Natural killer cell (primary cell): ENCODE measurements at regions of chr17 and their contacts with region 1.

Region 1: GRCh38 chr17:10984220-10984619 is 146.3 kb upstream of the PIRT start:
- DNase-seq: no peak
- ATAC-seq: no peak
- H3K4me3 ChIP-seq: no peak overlapping the region
- H3K4me3 Mint-ChIP-seq: no peak overlapping the region
- H3K27ac ChIP-seq: no peak overlapping the region
- H3K27ac Mint-ChIP-seq: no peak overlapping the region
- H3K4me1 ChIP-seq: no peaks in the 10 kb centered on the region
- H3K4me1 Mint-ChIP-seq: no peaks in the 10 kb centered on the region
- H3K27me3 ChIP-seq: no peaks in the 10 kb centered on the region
- H3K27me3 Mint-ChIP-seq: no peaks in the 10 kb centered on the region
- CTCF ChIP-seq: no peak

Region 2: GRCh38 chr17:10844621-10845387 is 139.4 kb before region 1 on chr17:
- intact Hi-C with region 1: no loop called
- DNase-seq: peak; percentile 49 to 82
- ATAC-seq: peak; percentile 88 to 99 (median 94)
- H3K4me3 ChIP-seq: peak overlapping the region; percentile 8
- H3K4me3 Mint-ChIP-seq: peak overlapping the region; percentile 21
- H3K27ac ChIP-seq: no peak overlapping the region
- H3K27ac Mint-ChIP-seq: peak overlapping the region in 1 of 2 donors; percentile 15
- H3K4me1 ChIP-seq: peaks cover 5% of the 10 kb centered on the region
- H3K4me1 Mint-ChIP-seq: peaks cover 8 to 12% of the 10 kb centered on the region in 2 donors
- H3K27me3 ChIP-seq: no peaks in the 10 kb centered on the region
- H3K27me3 Mint-ChIP-seq: peaks cover 8 to 14% of the 10 kb centered on the region in 2 donors
- CTCF ChIP-seq: peak; percentile 94

Region 3: DNA sequence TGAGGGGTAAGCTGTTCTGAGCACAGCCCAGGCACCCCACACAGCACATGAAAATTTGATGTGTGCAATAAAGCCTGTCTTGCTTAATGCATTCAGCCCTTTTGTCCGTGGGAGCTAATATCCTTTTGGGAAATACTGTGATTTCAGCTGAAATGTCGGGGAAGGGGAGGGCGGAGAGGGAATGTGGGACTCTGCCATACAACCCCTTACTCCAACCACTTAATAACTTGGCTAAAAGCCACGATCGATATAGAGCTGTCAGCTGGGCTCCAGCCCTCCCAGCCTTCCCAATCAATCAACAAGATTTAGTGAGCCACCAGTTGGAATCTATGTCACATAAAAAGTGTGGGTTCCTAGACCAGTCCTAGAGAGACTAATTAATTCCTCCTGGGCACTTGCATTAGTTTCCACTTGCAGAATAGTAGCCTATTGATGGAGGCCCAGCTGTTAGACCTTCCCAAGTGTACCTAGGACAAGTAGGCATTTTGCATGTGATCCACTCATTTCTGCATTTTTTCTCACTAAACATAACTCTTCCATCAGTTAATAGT is 63.6 kb before region 1 on chr17:
- intact Hi-C with region 1: loop called (anchors 10 kb)
- DNase-seq: no peak
- ATAC-seq: no peak
- H3K4me3 ChIP-seq: no peak overlapping the region
- H3K4me3 Mint-ChIP-seq: no peak overlapping the region
- H3K27ac ChIP-seq: no peak overlapping the region
- H3K27ac Mint-ChIP-seq: no peak overlapping the region
- H3K4me1 ChIP-seq: no peaks in the 10 kb centered on the region
- H3K4me1 Mint-ChIP-seq: no peaks in the 10 kb centered on the region
- H3K27me3 ChIP-seq: no peaks in the 10 kb centered on the region
- H3K27me3 Mint-ChIP-seq: peaks cover 0 to 13% of the 10 kb centered on the region in 2 donors
- CTCF ChIP-seq: no peak

Region 4: GRCh38 chr17:11006530-11006929 is 22.3 kb after region 1 on chr17:
- intact Hi-C with region 1: no loop called
- DNase-seq: no peak
- ATAC-seq: no peak
- H3K4me3 ChIP-seq: no peak overlapping the region
- H3K4me3 Mint-ChIP-seq: no peak overlapping the region
- H3K27ac ChIP-seq: no peak overlapping the region
- H3K27ac Mint-ChIP-seq: no peak overlapping the region
- H3K4me1 ChIP-seq: no peaks in the 10 kb centered on the region
- H3K4me1 Mint-ChIP-seq: no peaks in the 10 kb centered on the region
- H3K27me3 ChIP-seq: no peaks in the 10 kb centered on the region
- H3K27me3 Mint-ChIP-seq: peaks cover 0 to 2% of the 10 kb centered on the region in 2 donors
- CTCF ChIP-seq: no peak